CD14-positive monocyte (primary cell): ENCODE measurements at regions of chr12 and their contacts with region 1.

Region 1: DNA sequence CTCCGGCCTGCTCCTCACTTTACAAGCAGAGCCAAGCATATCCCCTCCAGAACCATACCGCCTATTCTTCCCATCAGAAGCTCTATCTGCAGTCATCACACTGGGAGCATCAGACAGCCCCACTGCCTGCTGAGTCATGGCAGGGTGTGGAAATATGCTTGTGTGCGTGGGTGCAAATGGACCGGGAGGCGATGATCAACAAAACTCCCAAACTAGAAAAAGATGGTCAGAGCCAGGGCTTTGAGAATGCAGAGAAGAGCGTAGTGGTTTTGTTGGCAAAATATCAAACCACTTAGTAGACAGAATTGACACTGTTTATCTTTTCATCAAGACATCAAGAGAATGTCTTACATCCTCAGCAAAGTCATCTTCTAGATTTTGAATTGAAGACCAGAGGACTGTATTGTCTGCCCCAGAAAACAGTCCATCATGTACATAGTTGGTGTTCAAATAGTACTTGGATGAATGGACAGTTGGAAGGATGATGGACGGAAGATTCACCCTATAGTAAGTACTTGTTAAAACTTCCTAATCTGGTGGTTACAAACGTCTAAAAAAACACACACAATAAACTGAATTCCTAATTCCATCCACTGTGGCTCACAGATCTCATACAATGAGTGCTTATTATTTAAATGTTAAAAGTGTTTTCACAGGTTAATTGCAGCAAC is 54.9 kb downstream of the VWF start:
- DNase-seq: peak; percentile 46 to 73 (median 55)
- H3K4me3 ChIP-seq: no peak overlapping the region
- H3K4me3 Mint-ChIP-seq: peak overlapping the region in 1 of 2 donors; percentile 67
- H3K27ac ChIP-seq: no peak overlapping the region
- H3K27ac Mint-ChIP-seq: peak overlapping the region in 5 of 7 donors; percentile 52 to 80 (median 70)
- H3K4me1 ChIP-seq: peaks cover 22 to 23% of the 10 kb centered on the region in 2 donors
- H3K4me1 Mint-ChIP-seq: peaks cover 47% of the 10 kb centered on the region
- H3K27me3 ChIP-seq: peaks cover 0 to 10% of the 10 kb centered on the region in 2 donors
- H3K27me3 Mint-ChIP-seq: peaks cover 20 to 28% (median 20%) of the 10 kb centered on the region in 3 donors
- CTCF ChIP-seq: no peak

Region 2: DNA sequence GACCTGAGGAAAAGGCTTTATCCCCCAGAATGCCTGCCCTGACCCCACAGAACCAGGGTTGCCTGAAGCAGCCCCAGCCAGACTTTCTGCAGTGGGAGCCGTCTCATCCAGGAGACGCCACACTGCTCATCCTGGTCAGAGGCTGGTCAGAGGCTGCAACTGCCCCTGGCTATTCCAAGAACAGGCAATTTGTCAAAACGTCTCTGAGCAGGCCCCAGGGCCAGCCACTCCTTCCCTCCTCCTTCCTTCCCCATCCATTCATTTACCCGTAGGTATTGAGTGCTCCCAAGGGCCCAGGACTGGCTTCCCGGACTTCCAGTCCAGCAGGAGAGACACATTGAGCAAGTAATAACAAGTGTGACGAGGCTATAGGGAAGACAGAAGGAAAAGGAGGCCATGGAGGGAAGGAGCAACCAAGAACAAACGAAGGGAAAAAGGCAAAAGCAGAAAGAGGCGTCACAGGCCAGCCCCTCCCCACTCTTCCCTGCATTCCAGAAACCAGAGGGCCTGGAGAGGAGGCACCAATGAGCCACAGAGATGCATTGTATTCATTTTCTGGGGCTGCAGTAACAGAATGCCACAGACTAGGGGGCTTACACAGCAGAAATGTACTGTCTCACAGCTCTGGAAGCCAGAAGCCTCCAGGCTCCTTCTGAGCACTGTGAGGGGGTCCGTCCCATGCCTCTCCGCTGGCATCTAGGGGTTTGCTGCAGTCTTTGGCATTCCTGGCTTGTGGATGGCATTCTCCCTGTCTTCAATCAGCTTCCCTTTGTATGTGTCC is 109.6 kb after region 1 on chr12:
- intact Hi-C with region 1: loop called in 1 of 2 experiments (anchors 10 kb)
- DNase-seq: no peak
- H3K4me3 ChIP-seq: no peak overlapping the region
- H3K4me3 Mint-ChIP-seq: peak overlapping the region in 1 of 2 donors; percentile 7
- H3K27ac ChIP-seq: no peak overlapping the region
- H3K27ac Mint-ChIP-seq: peak overlapping the region in 1 of 7 donors; percentile 58
- H3K4me1 ChIP-seq: peaks cover 34 to 36% of the 10 kb centered on the region in 2 donors
- H3K4me1 Mint-ChIP-seq: peaks cover 3% of the 10 kb centered on the region
- H3K27me3 ChIP-seq: no peaks in the 10 kb centered on the region
- H3K27me3 Mint-ChIP-seq: peaks cover 6 to 8% (median 7%) of the 10 kb centered on the region in 3 donors
- CTCF ChIP-seq: no peak

Region 3: GRCh38 chr12:6195665-6196535 is 126.3 kb after region 1 on chr12:
- intact Hi-C with region 1: loop called in 1 of 2 experiments (anchors 10 kb)
- DNase-seq: peak; percentile 47 to 71 (median 68)
- H3K4me3 ChIP-seq: no peak overlapping the region
- H3K4me3 Mint-ChIP-seq: no peak overlapping the region
- H3K27ac ChIP-seq: no peak overlapping the region
- H3K27ac Mint-ChIP-seq: peak overlapping the region in 5 of 7 donors; percentile 41 to 79 (median 52)
- H3K4me1 ChIP-seq: peaks cover 33 to 37% of the 10 kb centered on the region in 2 donors
- H3K4me1 Mint-ChIP-seq: peaks cover 53% of the 10 kb centered on the region
- H3K27me3 ChIP-seq: peaks cover 12 to 28% of the 10 kb centered on the region in 2 donors
- H3K27me3 Mint-ChIP-seq: peaks cover 33 to 51% (median 47%) of the 10 kb centered on the region in 3 donors
- CTCF ChIP-seq: peak; percentile 95